Lower leg skin (tissue), 4 donors: ENCODE measurements at regions of chr10 and their contacts with region 1.

Region 1: GRCh38 chr10:91758303-91759146 is 39.7 kb upstream of the TNKS2 start:
- DNase-seq: no peak
- H3K4me3 ChIP-seq: no peak overlapping the region
- CTCF ChIP-seq: no peak
- POLR2A ChIP-seq: no peak

Region 2: GRCh38 chr10:91910467-91910866 is 151.9 kb after region 1 on chr10:
- intact Hi-C with region 1: loop called (anchors 5 kb)
- DNase-seq: no peak
- H3K4me3 ChIP-seq: no peak overlapping the region
- CTCF ChIP-seq: no peak
- POLR2A ChIP-seq: no peak

Region 3: GRCh38 chr10:92544296-92544695 is 785.8 kb after region 1 on chr10:
- intact Hi-C with region 1: loop called (anchors 5 kb)
- DNase-seq: no peak
- H3K4me3 ChIP-seq: no peak overlapping the region
- CTCF ChIP-seq: no peak
- POLR2A ChIP-seq: no peak